ENCODE measurements at regions of chr13 and their contacts with region 1.

Region 1: GRCh38 chr13:101127741-101128353 is 288.5 kb downstream of the NALCN start:
- DNase-seq: peak; percentile 53
- ATAC-seq: peak; percentile 91
- H3K4me3 ChIP-seq: no peak overlapping the region
- H3K27ac ChIP-seq: no peak overlapping the region
- H3K4me1 ChIP-seq: no peaks in the 10 kb centered on the region
- H3K27me3 ChIP-seq: no peaks in the 10 kb centered on the region
- CTCF ChIP-seq: peak; percentile 81
- POLR2A ChIP-seq: no peak
- RAD21 ChIP-seq: peak; percentile 78

Region 2: DNA sequence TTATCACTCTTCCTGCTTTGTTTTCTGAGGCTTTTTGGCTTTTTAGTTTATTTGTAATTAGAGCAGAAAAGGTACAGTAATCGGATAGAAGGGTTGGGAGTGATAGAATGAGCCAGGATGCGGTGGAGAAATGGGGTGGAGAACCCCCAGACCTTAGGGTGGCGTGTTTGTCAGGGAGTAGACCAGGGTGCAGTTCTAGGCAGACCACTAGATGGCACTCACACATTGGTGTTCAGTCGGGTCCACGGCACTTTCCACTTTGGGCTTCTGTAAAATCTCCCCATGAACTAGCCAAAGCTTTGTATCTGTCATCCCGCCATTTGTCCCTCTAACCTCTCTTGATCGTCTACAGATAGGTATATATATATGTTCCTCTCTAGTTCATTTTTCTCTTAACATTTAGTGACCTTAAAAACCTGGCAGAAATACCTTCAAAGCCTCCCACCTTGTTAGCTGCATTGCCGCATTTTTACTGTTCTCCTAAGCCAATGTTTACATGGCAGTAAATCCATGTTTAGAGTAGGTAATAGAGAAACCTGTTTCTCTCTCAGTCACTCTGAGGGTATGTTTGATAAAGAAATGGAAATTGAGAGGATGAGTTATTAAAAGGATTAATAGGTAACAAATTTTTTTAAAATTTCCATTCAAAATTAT is 1471.6 kb before region 1 on chr13:
- CTCF ChIA-PET with region 1: no interaction called
- POLR2A ChIA-PET with region 1: no interaction called
- dilution Hi-C with region 1: no loop called
- in situ Hi-C with region 1: loop called (anchors 25 kb)
- intact Hi-C with region 1: loop called (anchors 2 kb)
- DNase-seq: peak; percentile 67
- ATAC-seq: peak; percentile 85
- H3K4me3 ChIP-seq: no peak overlapping the region
- H3K27ac ChIP-seq: no peak overlapping the region
- H3K4me1 ChIP-seq: no peaks in the 10 kb centered on the region
- H3K27me3 ChIP-seq: peaks cover 23% of the 10 kb centered on the region
- CTCF ChIP-seq: peak; percentile 87
- POLR2A ChIP-seq: no peak
- RAD21 ChIP-seq: peak; percentile 83

Region 3: GRCh38 chr13:100710176-100710575 is 417.7 kb before region 1 on chr13:
- CTCF ChIA-PET with region 1: no interaction called
- POLR2A ChIA-PET with region 1: no interaction called
- dilution Hi-C with region 1: no loop called
- in situ Hi-C with region 1: loop called (anchors 10 kb)
- intact Hi-C with region 1: no loop called
- DNase-seq: no peak
- ATAC-seq: no peak
- H3K4me3 ChIP-seq: no peak overlapping the region
- H3K27ac ChIP-seq: no peak overlapping the region
- H3K4me1 ChIP-seq: no peaks in the 10 kb centered on the region
- H3K27me3 ChIP-seq: 0 out of 2 replicates have a peak, but pooled peaks cover 2% of the 10 kb centered on the region
- CTCF ChIP-seq: no peak
- POLR2A ChIP-seq: no peak
- RAD21 ChIP-seq: no peak

Region 4: DNA sequence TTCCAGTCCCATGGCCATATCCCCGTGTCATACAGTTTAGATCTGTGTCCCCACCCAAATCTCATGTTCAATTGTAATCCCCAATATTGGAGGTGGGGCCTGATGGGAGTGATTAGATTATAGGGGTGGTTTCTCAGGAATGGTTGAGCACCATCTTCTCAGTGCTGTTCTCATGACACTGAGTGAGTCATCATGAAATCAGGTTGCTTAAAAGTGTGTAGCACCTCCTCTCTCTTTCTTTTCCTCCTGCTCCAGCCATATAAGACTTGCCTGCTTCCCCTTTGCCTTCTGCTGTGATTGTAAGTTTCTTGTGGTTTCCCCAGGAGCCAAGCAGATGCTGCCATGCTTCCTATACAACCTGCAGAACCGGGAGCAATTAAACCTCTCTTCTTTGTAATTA is 90.6 kb after region 1 on chr13:
- CTCF ChIA-PET with region 1: no interaction called
- POLR2A ChIA-PET with region 1: no interaction called
- dilution Hi-C with region 1: no loop called
- in situ Hi-C with region 1: no loop called
- intact Hi-C with region 1: no loop called
- DNase-seq: peak; percentile 60
- ATAC-seq: peak; percentile 37; the same call in 1 of the 2 replicates
- H3K4me3 ChIP-seq: no peak overlapping the region
- H3K27ac ChIP-seq: no peak overlapping the region
- H3K4me1 ChIP-seq: no peaks in the 10 kb centered on the region
- H3K27me3 ChIP-seq: no peaks in the 10 kb centered on the region
- CTCF ChIP-seq: no peak
- POLR2A ChIP-seq: no peak
- RAD21 ChIP-seq: no peak

Region 5: DNA sequence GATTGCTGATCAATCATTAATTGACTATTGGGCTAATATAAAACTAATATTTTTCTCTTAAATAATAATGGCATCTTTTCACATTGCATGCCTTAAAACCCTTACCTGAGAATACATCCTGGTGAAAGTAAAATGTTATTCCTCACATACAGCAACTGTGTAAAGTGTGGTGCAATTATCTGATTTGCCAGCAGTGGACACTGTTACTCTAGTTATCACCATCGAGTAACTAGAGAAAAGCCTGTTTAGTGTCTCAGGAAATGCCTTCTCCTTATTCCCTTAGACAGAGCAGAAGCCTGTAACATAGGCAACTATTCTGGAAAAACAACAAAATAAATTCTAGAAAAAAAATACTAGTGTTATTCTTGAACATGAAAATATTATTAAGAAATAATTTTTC is 814.2 kb after region 1 on chr13:
- CTCF ChIA-PET with region 1: no interaction called
- POLR2A ChIA-PET with region 1: no interaction called
- dilution Hi-C with region 1: no loop called
- in situ Hi-C with region 1: loop called (anchors 25 kb)
- intact Hi-C with region 1: no loop called
- DNase-seq: peak; percentile 16
- ATAC-seq: peak; percentile 77; the same call in 1 of the 2 replicates
- H3K4me3 ChIP-seq: no peak overlapping the region
- H3K27ac ChIP-seq: no peak overlapping the region
- H3K4me1 ChIP-seq: no peaks in the 10 kb centered on the region
- H3K27me3 ChIP-seq: no peaks in the 10 kb centered on the region
- CTCF ChIP-seq: peak; percentile 56
- POLR2A ChIP-seq: no peak
- RAD21 ChIP-seq: peak; percentile 55

Region 6: GRCh38 chr13:102555917-102556553 is 1428.2 kb after region 1 on chr13:
- CTCF ChIA-PET with region 1: no interaction called
- POLR2A ChIA-PET with region 1: no interaction called
- dilution Hi-C with region 1: no loop called
- in situ Hi-C with region 1: loop called (anchors 25 kb)
- intact Hi-C with region 1: no loop called
- DNase-seq: peak; percentile 26
- ATAC-seq: peak; percentile 75
- H3K4me3 ChIP-seq: no peak overlapping the region
- H3K27ac ChIP-seq: no peak overlapping the region
- H3K4me1 ChIP-seq: no peaks in the 10 kb centered on the region
- H3K27me3 ChIP-seq: no peaks in the 10 kb centered on the region
- CTCF ChIP-seq: peak; percentile 47
- POLR2A ChIP-seq: no peak
- RAD21 ChIP-seq: peak; percentile 51